Dendritic cell treated with granulocyte-macrophage colony-stimulating factor and Interleukin-4, amounts not matched to agents 40 ng/mL and 50 ng/mL, for 4 days (primary cell): ENCODE measurements at regions of chr12 and their contacts with region 1.

Region 1: GRCh38 chr12:52681526-52682380 is 1.5 kb upstream of the KRT1 start:
- H3K4me3 Mint-ChIP-seq: no peak overlapping the region
- H3K27ac Mint-ChIP-seq: no peak overlapping the region
- H3K4me1 Mint-ChIP-seq: no peaks in the 10 kb centered on the region
- H3K27me3 Mint-ChIP-seq: peaks cover 10% of the 10 kb centered on the region

Region 2: GRCh38 chr12:52413788-52414345 is 267.9 kb before region 1 on chr12:
- intact Hi-C with region 1: no loop called
- H3K4me3 Mint-ChIP-seq: no peak overlapping the region
- H3K27ac Mint-ChIP-seq: no peak overlapping the region
- H3K4me1 Mint-ChIP-seq: peaks cover 5% of the 10 kb centered on the region
- H3K27me3 Mint-ChIP-seq: peaks cover 3% of the 10 kb centered on the region

Region 3: DNA sequence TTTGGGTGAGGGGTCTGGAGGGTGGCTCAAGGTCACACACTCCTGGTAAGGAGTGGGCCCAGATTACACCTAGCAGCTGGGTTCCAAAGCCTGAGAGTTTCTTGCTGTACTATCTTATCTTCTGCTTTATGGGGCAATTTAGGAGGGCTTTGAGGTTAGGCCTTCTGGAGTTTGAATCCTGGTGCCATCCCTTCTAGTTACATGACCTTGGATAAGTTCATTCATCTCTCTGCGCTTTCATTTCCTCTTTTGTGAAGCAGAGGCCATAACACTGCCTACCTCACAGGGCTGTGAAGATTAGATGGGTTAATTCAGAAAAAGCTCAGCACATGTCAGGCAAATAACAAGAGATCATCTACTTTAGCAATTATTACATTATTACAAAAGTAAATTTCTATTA is 29.0 kb after region 1 on chr12:
- intact Hi-C with region 1: loop called (anchors 2 kb)
- H3K4me3 Mint-ChIP-seq: no peak overlapping the region
- H3K27ac Mint-ChIP-seq: no peak overlapping the region
- H3K4me1 Mint-ChIP-seq: peaks cover 8% of the 10 kb centered on the region
- H3K27me3 Mint-ChIP-seq: peaks cover 32% of the 10 kb centered on the region

Region 4: DNA sequence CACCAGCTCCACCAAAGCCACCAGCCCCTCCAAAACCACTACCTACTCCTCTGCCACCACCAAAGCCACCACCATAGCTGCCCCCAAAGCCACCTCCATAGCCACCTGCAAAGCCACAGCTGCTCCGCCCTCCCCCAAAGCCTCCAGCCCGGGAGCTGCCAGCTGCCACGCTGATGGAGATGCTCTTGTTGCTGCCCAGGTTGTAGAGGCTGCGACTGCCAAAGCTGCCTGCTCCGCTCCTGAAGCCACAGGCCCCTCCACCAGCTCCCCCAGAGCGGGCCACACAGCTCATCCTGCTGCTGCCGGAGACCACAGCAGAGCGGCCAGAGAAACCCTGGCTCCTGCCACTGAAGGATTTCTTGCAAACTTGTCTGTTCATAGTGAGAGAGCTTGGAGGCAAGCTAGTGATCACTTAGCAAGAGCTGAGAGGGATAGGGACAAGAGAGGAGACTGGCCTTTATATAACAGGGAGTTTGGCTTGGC is 95.2 kb after region 1 on chr12 and contains the start of gene KRT76:
- intact Hi-C with region 1: no loop called
- H3K4me3 Mint-ChIP-seq: no peak within 1 kb of the TSS
- H3K27ac Mint-ChIP-seq: no peak within 1 kb of the TSS
- H3K4me1 Mint-ChIP-seq: no peaks in the 10 kb centered on the region
- H3K27me3 Mint-ChIP-seq: peaks cover 9% of the 10 kb centered on the region

Region 5: GRCh38 chr12:52865090-52865944 is 183.6 kb after region 1 on chr12:
- intact Hi-C with region 1: no loop called
- H3K4me3 Mint-ChIP-seq: no peak overlapping the region
- H3K27ac Mint-ChIP-seq: peak overlapping the region; percentile 38
- H3K4me1 Mint-ChIP-seq: peaks cover 51% of the 10 kb centered on the region
- H3K27me3 Mint-ChIP-seq: peaks cover 3% of the 10 kb centered on the region